Activated CD4-positive, alpha-beta memory T cell treated with anti-CD3 and anti-CD28 coated beads for 36 hours (primary cell): ENCODE measurements at regions of chr4 and their contacts with region 1.

Region 1: GRCh38 chr4:158259955-158260575 is 49.8 kb downstream of the TMEM144 start:
- DNase-seq: no peak
- H3K4me3 Mint-ChIP-seq: no peak overlapping the region
- H3K27ac Mint-ChIP-seq: no peak overlapping the region
- H3K4me1 Mint-ChIP-seq: no peaks in the 10 kb centered on the region
- H3K27me3 Mint-ChIP-seq: peaks cover 1% of the 10 kb centered on the region

Region 2: DNA sequence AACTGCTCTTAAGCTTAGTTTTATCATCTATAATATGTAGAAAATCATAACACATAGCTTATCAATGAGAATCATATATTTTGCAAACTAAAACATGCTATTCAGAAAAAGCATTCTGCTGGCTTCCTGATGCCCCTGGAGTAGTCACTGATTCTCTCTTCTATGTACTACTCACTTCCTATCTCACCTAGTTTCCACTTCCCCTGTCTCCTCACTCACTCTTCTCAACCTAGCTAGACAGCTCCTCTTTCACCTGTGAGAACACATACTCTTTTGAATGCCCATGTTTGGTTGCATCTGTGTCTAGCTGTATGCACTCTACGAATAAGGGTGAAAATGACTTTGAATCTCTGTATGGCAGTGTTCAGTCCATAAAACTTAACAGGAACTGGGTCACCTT is 40.4 kb before region 1 on chr4:
- CTCF ChIA-PET with region 1: no interaction called
- POLR2A ChIA-PET with region 1: no interaction called
- intact Hi-C with region 1: no loop called
- DNase-seq: no peak
- H3K4me3 Mint-ChIP-seq: no peak overlapping the region
- H3K27ac Mint-ChIP-seq: no peak overlapping the region
- H3K4me1 Mint-ChIP-seq: no peaks in the 10 kb centered on the region
- H3K27me3 Mint-ChIP-seq: no peaks in the 10 kb centered on the region

Region 3: DNA sequence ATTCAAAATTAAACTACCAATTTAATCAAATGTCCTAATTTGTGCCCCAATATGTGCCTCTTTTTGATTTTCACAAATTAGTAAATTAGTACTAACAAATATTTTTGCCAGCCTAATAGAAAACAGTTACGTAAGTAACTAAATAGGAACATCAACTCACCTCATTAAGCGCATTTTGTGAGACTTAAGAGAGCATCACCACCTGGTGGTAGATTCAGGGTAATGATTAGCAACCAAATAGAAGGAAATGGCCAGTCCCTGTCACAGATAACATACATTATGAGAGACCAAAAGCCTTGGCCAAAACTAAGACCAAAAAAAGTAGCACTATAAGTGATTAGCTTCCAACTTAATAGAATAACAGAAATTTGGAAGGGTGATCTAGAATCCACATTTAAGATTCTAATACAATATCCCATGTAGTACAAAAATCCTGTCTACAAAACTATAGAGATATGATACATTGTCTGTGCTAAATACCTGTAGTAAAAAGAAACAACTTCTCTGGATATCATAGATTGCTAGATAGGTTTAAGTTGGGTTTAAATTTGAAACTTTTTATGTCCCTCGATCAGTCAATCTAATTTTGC is 364.9 kb after region 1 on chr4:
- CTCF ChIA-PET with region 1: no interaction called
- POLR2A ChIA-PET with region 1: no interaction called
- intact Hi-C with region 1: loop called (anchors 1 kb)
- DNase-seq: no peak
- H3K4me3 Mint-ChIP-seq: no peak overlapping the region
- H3K27ac Mint-ChIP-seq: no peak overlapping the region
- H3K4me1 Mint-ChIP-seq: no peaks in the 10 kb centered on the region
- H3K27me3 Mint-ChIP-seq: peaks cover 11% of the 10 kb centered on the region